ENCODE measurements at regions of chr12 and their contacts with region 1.

Region 1: GRCh38 chr12:93502802-93503623 is 35.7 kb downstream of the MRPL42 start:
- DNase-seq: peak; percentile 5 to 78 (median 54)
- ATAC-seq: peak in 1 of 4 experiments; percentile 46
- H3K4me3 ChIP-seq: no peak overlapping the region
- H3K4me3 Mint-ChIP-seq: no peak overlapping the region
- H3K27ac ChIP-seq: no peak overlapping the region
- H3K27ac Mint-ChIP-seq: no peak overlapping the region
- H3K4me1 ChIP-seq: no peaks in the 10 kb centered on the region
- H3K4me1 Mint-ChIP-seq: peaks cover 0 to 7% (median 0%) of the 10 kb centered on the region in 3 donors
- H3K27me3 ChIP-seq: no peaks in the 10 kb centered on the region
- H3K27me3 Mint-ChIP-seq: no peaks in the 10 kb centered on the region

Region 2: GRCh38 chr12:92987362-92987761 is 515.7 kb before region 1 on chr12:
- CTCF ChIA-PET with region 1: interaction called in 1 of 2 experiments, 10 read pairs
- POLR2A ChIA-PET with region 1: no interaction called
- DNase-seq: peak in 3 of 35 experiments; percentile 15 to 70 (median 24)
- ATAC-seq: peak; percentile 56 to 78 (median 67)
- H3K4me3 ChIP-seq: no peak overlapping the region
- H3K4me3 Mint-ChIP-seq: peak overlapping the region in 1 of 3 donors; percentile 49
- H3K27ac ChIP-seq: no peak overlapping the region
- H3K27ac Mint-ChIP-seq: peak overlapping the region in 1 of 2 donors; percentile 25
- H3K4me1 ChIP-seq: peaks cover 6 to 9% of the 10 kb centered on the region in 2 experiments
- H3K4me1 Mint-ChIP-seq: peaks cover 10 to 13% (median 10%) of the 10 kb centered on the region in 3 donors
- H3K27me3 ChIP-seq: no peaks in the 10 kb centered on the region
- H3K27me3 Mint-ChIP-seq: no peaks in the 10 kb centered on the region

Region 3: DNA sequence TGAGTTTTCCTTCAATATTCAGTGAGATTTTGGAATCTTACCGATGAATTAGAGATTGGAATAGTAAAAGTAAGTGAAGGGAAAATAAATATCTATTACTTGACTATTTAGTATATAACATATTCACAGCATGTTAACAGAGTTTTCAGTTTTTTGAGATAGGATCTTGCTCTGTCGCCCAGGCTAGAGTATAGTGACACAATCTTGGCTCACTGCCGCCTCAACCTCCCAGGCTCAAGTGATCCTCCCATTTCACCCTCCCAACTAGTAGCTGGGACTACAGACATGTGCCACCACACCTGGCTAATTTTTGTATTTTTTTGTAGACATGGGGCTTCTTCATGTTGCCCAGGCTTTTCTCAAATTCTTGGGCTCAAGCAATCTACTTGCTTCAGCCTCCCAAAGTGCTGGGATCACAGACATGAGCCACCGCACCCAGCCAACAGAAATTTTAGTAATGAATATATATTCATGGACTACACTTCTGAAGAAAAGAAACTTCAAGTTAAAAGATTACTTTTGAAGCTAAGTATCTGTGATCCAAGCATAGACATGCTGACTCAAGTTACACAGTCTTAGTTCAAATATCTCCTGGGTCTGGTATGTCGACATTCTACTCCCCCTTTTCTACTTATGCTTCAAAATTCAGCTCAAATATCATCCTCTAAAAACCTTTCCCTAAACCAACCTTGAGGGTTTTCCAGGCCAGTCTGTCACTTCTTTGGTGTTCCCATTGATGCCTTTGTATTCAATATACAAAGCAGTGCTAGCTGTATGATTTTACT is 75.0 kb before region 1 on chr12:
- CTCF ChIA-PET with region 1: interaction called in 1 of 2 experiments, 11 read pairs
- POLR2A ChIA-PET with region 1: no interaction called
- DNase-seq: no peak
- ATAC-seq: no peak
- H3K4me3 ChIP-seq: no peak overlapping the region
- H3K4me3 Mint-ChIP-seq: peak overlapping the region in 2 of 3 donors; percentile 7 to 53
- H3K27ac ChIP-seq: no peak overlapping the region
- H3K27ac Mint-ChIP-seq: peak overlapping the region; percentile 81 to 85
- H3K4me1 ChIP-seq: peaks cover 30 to 47% of the 10 kb centered on the region in 2 experiments
- H3K4me1 Mint-ChIP-seq: peaks cover 87 to 90% (median 89%) of the 10 kb centered on the region in 3 donors
- H3K27me3 ChIP-seq: no peaks in the 10 kb centered on the region
- H3K27me3 Mint-ChIP-seq: no peaks in the 10 kb centered on the region

Region 4: GRCh38 chr12:93653079-93653478 is 150.1 kb after region 1 on chr12:
- CTCF ChIA-PET with region 1: no interaction called
- POLR2A ChIA-PET with region 1: no interaction called
- DNase-seq: no peak
- ATAC-seq: no peak
- H3K4me3 ChIP-seq: no peak overlapping the region
- H3K4me3 Mint-ChIP-seq: no peak overlapping the region
- H3K27ac ChIP-seq: no peak overlapping the region
- H3K27ac Mint-ChIP-seq: no peak overlapping the region
- H3K4me1 ChIP-seq: no peaks in the 10 kb centered on the region
- H3K4me1 Mint-ChIP-seq: no peaks in the 10 kb centered on the region
- H3K27me3 ChIP-seq: peaks cover 0 to 4% of the 10 kb centered on the region in 2 experiments
- H3K27me3 Mint-ChIP-seq: peaks cover 0 to 2% of the 10 kb centered on the region in 2 donors

Region 5: DNA sequence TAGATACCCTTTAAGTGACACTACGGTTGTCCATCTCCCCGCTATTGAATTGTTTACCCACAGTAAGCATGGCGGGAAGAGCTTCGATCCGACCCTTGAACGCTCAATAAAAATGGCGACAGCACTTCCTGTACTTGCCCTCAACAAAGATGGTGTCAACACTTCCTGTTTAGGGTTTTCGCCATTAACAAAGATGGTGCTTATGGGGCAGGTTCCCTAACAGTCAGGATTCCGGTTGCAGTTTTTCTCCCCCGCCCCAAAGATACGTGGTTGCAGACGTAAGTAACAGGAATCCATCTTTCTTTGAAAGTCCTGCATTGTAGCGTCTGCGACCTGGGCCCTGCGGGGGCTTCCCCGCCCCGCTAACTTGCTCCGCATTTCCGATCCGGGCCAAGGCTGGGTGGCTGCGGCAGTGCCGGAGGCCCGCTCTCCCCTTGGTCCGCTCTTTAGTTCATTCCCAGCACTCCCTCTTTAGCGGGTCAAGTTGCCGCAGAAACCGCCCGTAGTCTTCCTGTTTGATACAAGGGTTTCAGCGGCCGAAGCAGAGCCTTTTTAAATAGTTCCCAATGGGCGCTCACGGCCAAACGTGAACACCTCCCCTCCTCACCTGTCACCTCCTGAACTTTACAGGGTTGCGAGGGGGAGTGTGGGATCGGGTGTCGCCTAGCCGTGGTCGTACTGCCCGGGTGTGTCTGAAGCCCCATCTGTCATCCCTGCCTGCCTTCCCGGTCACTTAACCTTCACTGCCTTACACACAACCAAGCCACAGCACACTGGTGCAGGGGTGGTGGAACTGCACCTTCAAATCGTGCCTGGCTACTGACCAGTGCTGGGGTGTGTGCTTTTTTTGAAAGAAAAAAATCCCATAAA is 174.4 kb after region 1 on chr12 and contains the start of gene CRADD:
- CTCF ChIA-PET with region 1: no interaction called
- POLR2A ChIA-PET with region 1: no interaction called
- DNase-seq: peak; percentile 69 to 99 (median 89)
- ATAC-seq: peak; percentile 94 to 96 (median 94)
- H3K4me3 ChIP-seq: peak within 1 kb of the TSS; percentile 75 to 85
- H3K4me3 Mint-ChIP-seq: peak within 1 kb of the TSS; percentile 93 to 98 (median 96)
- H3K27ac ChIP-seq: peak within 1 kb of the TSS; percentile 98
- H3K27ac Mint-ChIP-seq: peak within 1 kb of the TSS; percentile 99 to 100
- H3K4me1 ChIP-seq: peaks cover 4 to 21% of the 10 kb centered on the region in 2 experiments
- H3K4me1 Mint-ChIP-seq: peaks cover 40 to 45% (median 40%) of the 10 kb centered on the region in 3 donors
- H3K27me3 ChIP-seq: peaks cover 0 to 3% of the 10 kb centered on the region in 2 experiments
- H3K27me3 Mint-ChIP-seq: peaks cover 8 to 17% of the 10 kb centered on the region in 2 donors
- total RNA-seq, gene CRADD: 11.2 to 19.3 (median 12.3) TPM

Region 6: DNA sequence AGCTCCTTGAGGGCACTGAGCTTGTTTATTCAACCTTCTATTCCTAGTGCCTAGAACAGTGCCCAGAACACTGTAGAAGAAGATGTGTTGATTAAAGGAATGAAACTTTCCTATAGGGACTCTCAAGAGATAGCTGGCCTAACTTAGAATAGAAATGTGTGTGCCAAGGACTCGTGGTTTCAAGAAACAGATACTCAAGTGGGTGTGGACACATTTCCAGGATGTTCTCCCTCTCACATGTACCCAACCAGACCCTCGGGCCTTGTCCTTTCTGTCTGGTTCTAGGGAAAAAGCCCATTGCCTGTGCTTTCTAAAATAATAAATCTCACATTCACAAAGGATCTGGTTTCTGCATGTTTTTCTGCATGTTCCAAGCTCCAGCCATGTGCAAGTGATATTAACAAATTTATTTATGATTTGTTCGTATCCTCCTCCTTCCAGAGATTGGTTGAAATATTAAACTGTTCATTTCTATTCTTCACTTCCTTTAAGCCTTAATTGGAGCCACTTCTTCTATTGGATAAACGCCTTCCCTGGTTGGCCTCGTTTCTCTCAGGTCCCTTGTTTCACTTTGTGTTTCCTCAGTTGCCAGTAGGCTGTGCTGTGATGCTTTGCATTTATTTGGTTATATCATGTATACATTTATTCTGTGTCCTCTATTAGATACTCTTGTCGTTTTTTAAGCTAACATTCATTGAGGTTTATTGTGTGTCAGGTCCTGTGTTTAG is 263.9 kb after region 1 on chr12:
- CTCF ChIA-PET with region 1: interaction called, 16 read pairs
- POLR2A ChIA-PET with region 1: no interaction called
- DNase-seq: peak in 18 of 35 experiments; percentile 6 to 60 (median 27)
- ATAC-seq: peak; percentile 66 to 93 (median 76)
- H3K4me3 ChIP-seq: no peak overlapping the region
- H3K4me3 Mint-ChIP-seq: peak overlapping the region in 1 of 3 donors; percentile 0
- H3K27ac ChIP-seq: peak overlapping the region; percentile 36
- H3K27ac Mint-ChIP-seq: peak overlapping the region; percentile 1 to 41
- H3K4me1 ChIP-seq: peaks cover 0 to 15% of the 10 kb centered on the region in 2 experiments
- H3K4me1 Mint-ChIP-seq: peaks cover 26 to 51% (median 35%) of the 10 kb centered on the region in 3 donors
- H3K27me3 ChIP-seq: no peaks in the 10 kb centered on the region
- H3K27me3 Mint-ChIP-seq: no peaks in the 10 kb centered on the region

Region 7: DNA sequence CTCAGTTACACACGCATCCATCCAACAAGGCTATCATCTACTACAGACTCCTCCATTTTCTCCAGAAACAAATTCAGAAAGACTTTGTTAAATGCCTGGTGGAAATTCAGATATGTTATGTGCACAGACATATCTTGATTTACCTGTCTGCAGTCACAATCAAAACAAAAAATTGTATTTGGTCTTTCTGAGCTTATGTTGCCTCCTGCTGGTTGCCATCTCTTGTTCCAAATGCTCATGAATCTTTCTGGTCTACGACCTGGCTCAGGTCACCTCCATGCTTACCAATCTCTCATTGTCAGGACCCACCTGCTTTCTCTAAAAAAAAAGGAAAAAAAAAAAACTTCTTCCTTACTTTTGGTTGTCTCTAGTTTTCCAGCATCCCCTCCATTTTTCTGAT is 476.2 kb after region 1 on chr12:
- CTCF ChIA-PET with region 1: interaction called, 6 to 13 read pairs
- POLR2A ChIA-PET with region 1: no interaction called
- DNase-seq: peak in 7 of 35 experiments; percentile 1 to 54 (median 10)
- ATAC-seq: no peak
- H3K4me3 ChIP-seq: no peak overlapping the region
- H3K4me3 Mint-ChIP-seq: no peak overlapping the region
- H3K27ac ChIP-seq: no peak overlapping the region
- H3K27ac Mint-ChIP-seq: no peak overlapping the region
- H3K4me1 ChIP-seq: peaks cover 2 to 17% of the 10 kb centered on the region in 2 experiments
- H3K4me1 Mint-ChIP-seq: peaks cover 14 to 40% (median 27%) of the 10 kb centered on the region in 3 donors
- H3K27me3 ChIP-seq: no peaks in the 10 kb centered on the region
- H3K27me3 Mint-ChIP-seq: no peaks in the 10 kb centered on the region